ENCODE measurements at regions of chr17 and their contacts with region 1.

Region 1: GRCh38 chr17:80008383-80008840 is 27.3 kb downstream of the TBC1D16 start:
- DNase-seq: peak; percentile 89
- ATAC-seq: peak; percentile 87
- H3K4me3 ChIP-seq: no peak overlapping the region
- H3K27ac ChIP-seq: no peak overlapping the region
- H3K4me1 ChIP-seq: peaks cover 8% of the 10 kb centered on the region; the same call in 1 of the 2 replicates
- H3K27me3 ChIP-seq: no peaks in the 10 kb centered on the region
- CTCF ChIP-seq: peak; percentile 98

Region 2: GRCh38 chr17:80029258-80029974 is 21.0 kb after region 1 on chr17:
- CTCF ChIA-PET with region 1: interaction called, 5 read pairs
- POLR2A ChIA-PET with region 1: no interaction called
- intact Hi-C with region 1: loop called (anchors 2 kb)
- DNase-seq: peak; percentile 96
- ATAC-seq: peak; percentile 96
- H3K4me3 ChIP-seq: no peak overlapping the region; the same call in 1 of the 2 replicates
- H3K27ac ChIP-seq: peak overlapping the region; percentile 70
- H3K4me1 ChIP-seq: peaks cover 38% of the 10 kb centered on the region
- H3K27me3 ChIP-seq: no peaks in the 10 kb centered on the region
- CTCF ChIP-seq: no peak

Region 3: GRCh38 chr17:80082403-80083135 is 74.2 kb after region 1 on chr17:
- CTCF ChIA-PET with region 1: interaction called, 6 read pairs
- POLR2A ChIA-PET with region 1: no interaction called
- intact Hi-C with region 1: loop called (anchors 5 kb)
- DNase-seq: peak; percentile 91
- ATAC-seq: peak; percentile 88
- H3K4me3 ChIP-seq: peak overlapping the region; percentile 46; the same call in 1 of the 2 replicates
- H3K27ac ChIP-seq: no peak overlapping the region
- H3K4me1 ChIP-seq: 0 out of 2 replicates have a peak, but pooled peaks cover 3% of the 10 kb centered on the region
- H3K27me3 ChIP-seq: no peaks in the 10 kb centered on the region
- CTCF ChIP-seq: peak; percentile 94

Region 4: DNA sequence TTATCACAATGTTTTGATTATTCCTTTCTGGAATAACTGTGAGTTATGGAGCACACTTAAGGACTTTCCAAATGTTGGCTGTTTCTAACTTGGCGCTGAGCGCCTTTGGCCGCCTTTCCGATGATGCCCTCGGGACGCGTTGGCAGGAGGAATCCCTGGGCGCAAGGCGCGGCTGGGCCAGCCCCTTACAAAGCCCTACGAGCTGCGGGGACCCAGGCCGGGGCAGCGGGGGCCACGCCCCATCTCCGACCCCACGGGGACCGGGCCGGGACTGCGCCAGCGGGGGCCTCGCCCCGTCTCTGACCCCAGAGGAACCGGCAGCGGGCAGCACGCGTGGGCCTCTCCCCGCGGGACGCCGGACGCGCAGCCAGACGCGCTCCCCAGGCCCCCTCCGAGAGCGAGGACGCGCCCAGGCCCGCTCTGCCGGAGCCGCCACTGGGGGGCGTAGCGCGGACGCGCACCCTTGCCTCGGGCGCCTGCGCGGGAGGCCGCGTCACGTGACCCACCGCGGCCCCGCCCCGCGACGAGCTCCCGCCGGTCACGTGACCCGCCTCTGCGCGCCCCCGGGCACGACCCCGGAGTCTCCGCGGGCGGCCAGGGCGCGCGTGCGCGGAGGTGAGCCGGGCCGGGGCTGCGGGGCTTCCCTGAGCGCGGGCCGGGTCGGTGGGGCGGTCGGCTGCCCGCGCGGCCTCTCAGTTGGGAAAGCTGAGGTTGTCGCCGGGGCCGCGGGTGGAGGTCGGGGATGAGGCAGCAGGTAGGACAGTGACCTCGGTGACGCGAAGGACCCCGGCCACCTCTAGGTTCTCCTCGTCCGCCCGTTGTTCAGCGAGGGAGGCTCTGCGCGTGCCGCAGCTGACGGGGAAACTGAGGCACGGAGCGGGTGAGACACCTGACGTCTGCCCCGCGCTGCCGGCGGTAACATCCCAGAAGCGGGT is 92.9 kb after region 1 on chr17 and contains the start of gene GAA:
- CTCF ChIA-PET with region 1: interaction called, 5 read pairs
- POLR2A ChIA-PET with region 1: no interaction called
- intact Hi-C with region 1: loop called (anchors 1 kb)
- DNase-seq: peak; percentile 94
- ATAC-seq: peak; percentile 88
- H3K4me3 ChIP-seq: peak within 1 kb of the TSS; percentile 96
- H3K27ac ChIP-seq: no peak within 1 kb of the TSS
- H3K4me1 ChIP-seq: peaks cover 18% of the 10 kb centered on the region
- H3K27me3 ChIP-seq: no peaks in the 10 kb centered on the region
- CTCF ChIP-seq: peak; percentile 74
- total RNA-seq, gene GAA: 76.2 and 126 TPM in 2 replicates

Measured in PC-3 (cell line).